BJ (cell line): ENCODE measurements at regions of chr11 and their contacts with region 1.

Region 1: GRCh38 chr11:83249972-83250593 is 36.1 kb downstream of the CCDC90B start:
- DNase-seq: no peak
- H3K4me3 ChIP-seq: no peak overlapping the region
- H3K27me3 ChIP-seq: no peaks in the 10 kb centered on the region
- CTCF ChIP-seq: peak; percentile 71

Region 2: DNA sequence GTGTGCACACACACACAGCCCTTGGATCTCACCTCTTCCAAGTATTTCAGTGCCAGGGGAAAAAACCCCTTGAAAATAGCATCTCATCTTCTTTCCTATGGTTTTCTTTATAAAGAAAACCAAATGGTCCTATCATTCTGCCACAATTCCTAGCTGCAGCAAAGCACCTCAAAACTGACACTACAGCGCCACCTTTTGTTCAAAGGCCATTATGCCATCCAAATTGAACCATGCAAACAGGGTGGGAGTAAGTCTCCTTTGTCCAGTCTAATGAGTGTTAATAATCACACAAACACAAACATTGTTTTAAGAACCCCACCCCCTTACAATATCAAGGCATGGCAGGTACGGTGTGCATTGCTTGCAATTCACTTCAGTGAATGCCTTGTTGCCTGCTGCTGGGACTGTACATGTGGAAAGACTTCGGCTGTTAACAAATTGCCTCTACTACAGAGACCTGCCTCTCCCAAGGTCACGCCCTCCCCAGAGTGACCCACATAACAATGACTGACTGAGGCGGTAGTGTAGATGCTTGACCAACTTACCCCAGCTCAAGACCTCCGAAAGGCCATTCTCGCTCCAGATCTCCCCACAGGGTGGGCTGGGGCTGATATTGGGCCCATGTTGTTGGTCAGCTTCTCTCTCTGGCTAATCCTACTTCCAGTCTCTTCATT is 548.1 kb before region 1 on chr11:
- CTCF ChIA-PET with region 1: no interaction called
- POLR2A ChIA-PET with region 1: no interaction called
- DNase-seq: no peak
- H3K4me3 ChIP-seq: no peak overlapping the region
- H3K27me3 ChIP-seq: no peaks in the 10 kb centered on the region
- CTCF ChIP-seq: peak; percentile 65

Region 3: GRCh38 chr11:82718307-82718706 is 531.8 kb before region 1 on chr11:
- CTCF ChIA-PET with region 1: interaction called, 14 read pairs
- POLR2A ChIA-PET with region 1: no interaction called
- DNase-seq: peak; percentile 6
- H3K4me3 ChIP-seq: no peak overlapping the region
- H3K27me3 ChIP-seq: peaks cover 7% of the 10 kb centered on the region
- CTCF ChIP-seq: peak; percentile 85

Region 4: DNA sequence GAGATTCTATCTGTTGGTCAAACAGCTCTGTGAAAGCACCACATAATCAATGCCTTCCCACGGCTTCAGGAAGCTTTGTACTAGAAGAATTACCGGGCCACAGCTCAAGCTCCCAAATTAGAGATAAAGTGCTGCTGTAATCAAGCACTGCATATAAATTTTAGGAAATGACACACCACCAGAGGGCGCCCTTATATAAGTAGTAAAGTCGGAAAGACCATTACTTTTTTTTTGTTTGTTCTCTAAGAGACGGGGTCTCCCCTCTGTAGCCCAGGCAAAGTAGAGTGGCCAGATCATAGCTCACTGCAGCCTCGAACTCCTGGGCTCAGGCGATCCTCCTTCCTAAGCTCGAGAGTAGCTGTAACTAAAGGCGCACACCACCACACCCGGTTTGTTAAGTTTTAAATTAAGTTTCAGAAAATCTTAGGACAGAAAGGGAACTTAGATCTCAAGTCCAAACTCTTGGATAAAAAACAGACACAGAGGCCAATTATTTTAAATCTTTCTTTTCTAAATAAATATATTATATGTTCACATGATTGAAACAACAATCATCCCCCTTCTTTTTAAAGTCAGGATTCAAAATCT is 382.5 kb before region 1 on chr11:
- CTCF ChIA-PET with region 1: interaction called, 15 read pairs
- POLR2A ChIA-PET with region 1: no interaction called
- DNase-seq: no peak
- H3K4me3 ChIP-seq: no peak overlapping the region
- H3K27me3 ChIP-seq: no peaks in the 10 kb centered on the region
- CTCF ChIP-seq: peak; percentile 63

Region 5: DNA sequence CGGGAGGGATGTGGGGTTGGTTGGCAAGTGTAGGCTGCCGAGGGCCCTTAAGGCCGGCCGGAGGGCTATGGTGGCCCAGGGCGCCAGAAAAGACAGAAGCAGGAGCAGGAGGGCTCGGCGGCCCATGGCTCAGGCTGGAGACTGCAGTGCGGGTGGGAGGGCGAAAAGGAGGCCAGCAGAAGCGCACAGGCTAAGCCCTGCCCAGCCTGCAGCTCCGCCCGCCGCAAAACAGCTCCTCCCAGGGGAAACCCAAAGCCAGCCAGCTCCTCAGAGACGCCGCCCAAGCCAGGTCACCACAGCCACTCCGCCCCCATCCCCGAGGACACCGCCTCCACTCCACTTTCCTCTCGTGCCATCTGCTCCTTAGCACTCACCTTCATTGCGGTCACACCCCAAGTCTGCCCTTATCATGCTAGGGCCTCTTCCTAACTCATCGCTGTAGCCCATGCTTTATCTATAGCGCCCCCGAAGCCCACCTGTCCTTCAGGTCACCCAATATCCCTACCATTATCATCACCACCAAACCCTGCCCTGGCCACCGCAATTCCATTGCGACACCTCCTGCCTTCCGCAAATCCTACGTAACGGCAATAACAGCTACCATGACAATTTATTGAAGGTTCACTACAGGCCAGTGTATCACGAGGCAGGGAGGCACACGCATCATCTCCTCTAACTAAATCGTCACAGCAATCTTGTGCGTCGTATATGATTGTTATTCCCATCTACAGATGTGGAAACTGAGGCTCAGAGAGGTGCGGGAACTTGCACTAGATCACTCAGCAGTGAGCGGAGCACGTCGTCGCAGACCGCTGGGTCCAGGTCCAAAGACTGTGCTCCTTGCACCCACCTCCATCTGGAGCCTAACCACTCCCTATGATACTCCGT is 349.6 kb before region 1 on chr11 and contains the start of gene PRCP:
- CTCF ChIA-PET with region 1: interaction called, 29 read pairs
- POLR2A ChIA-PET with region 1: no interaction called
- DNase-seq: peak; percentile 54
- H3K4me3 ChIP-seq: peak within 1 kb of the TSS; percentile 62
- H3K27me3 ChIP-seq: no peaks in the 10 kb centered on the region
- CTCF ChIP-seq: no peak
- polyA plus RNA-seq, gene PRCP: 62.0 and 127 TPM in 2 replicates

Region 6: GRCh38 chr11:82906244-82906654 is 343.8 kb before region 1 on chr11:
- CTCF ChIA-PET with region 1: interaction called, 29 read pairs
- POLR2A ChIA-PET with region 1: no interaction called
- DNase-seq: no peak
- H3K4me3 ChIP-seq: no peak overlapping the region
- H3K27me3 ChIP-seq: no peaks in the 10 kb centered on the region
- CTCF ChIP-seq: peak; percentile 41

Region 7: DNA sequence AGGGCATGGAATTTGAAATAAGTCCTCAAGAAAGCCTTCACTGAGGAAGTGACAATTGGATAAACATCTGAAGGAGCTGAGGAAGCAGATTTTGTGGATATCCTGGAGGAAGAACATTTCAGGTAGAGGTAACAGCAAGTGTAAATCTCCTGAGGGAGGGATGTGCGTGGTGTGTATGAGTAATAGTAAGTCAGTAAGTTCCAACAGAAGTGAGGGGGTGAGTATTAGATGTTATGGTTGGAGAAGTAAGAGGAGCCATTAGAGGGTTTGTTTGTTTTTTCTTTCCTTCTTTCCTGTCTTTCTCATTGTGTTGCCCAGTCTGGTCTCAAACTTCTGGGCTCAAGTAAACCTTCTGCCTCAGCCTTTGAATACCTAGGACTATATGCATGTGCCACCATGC is 27.6 kb before region 1 on chr11:
- CTCF ChIA-PET with region 1: interaction called, 14 read pairs
- POLR2A ChIA-PET with region 1: no interaction called
- DNase-seq: no peak
- H3K4me3 ChIP-seq: no peak overlapping the region
- H3K27me3 ChIP-seq: no peaks in the 10 kb centered on the region
- CTCF ChIP-seq: no peak

Region 8: GRCh38 chr11:83238111-83238510 is 12.0 kb before region 1 on chr11:
- CTCF ChIA-PET with region 1: interaction called, 13 read pairs
- POLR2A ChIA-PET with region 1: no interaction called
- DNase-seq: no peak
- H3K4me3 ChIP-seq: no peak overlapping the region
- H3K27me3 ChIP-seq: no peaks in the 10 kb centered on the region
- CTCF ChIP-seq: no peak